PC-9 (cell line): ENCODE measurements at regions of chr17 and their contacts with region 1.

Region 1: GRCh38 chr17:28834420-28834819 is 8.2 kb downstream of the FAM222B start:
- DNase-seq: no peak
- H3K4me3 ChIP-seq: no peak overlapping the region
- H3K27ac ChIP-seq: no peak overlapping the region
- H3K4me1 ChIP-seq: no peaks in the 10 kb centered on the region
- H3K27me3 ChIP-seq: no peaks in the 10 kb centered on the region
- CTCF ChIP-seq: no peak

Region 2: GRCh38 chr17:29039764-29040598 is 205.6 kb after region 1 on chr17:
- CTCF ChIA-PET with region 1: no interaction called
- POLR2A ChIA-PET with region 1: interaction called, 16 read pairs
- intact Hi-C with region 1: no loop called
- DNase-seq: peak in 1 of 2 experiments; percentile 21
- H3K4me3 ChIP-seq: no peak overlapping the region
- H3K27ac ChIP-seq: no peak overlapping the region
- H3K4me1 ChIP-seq: no peaks in the 10 kb centered on the region
- H3K27me3 ChIP-seq: peaks cover 43% of the 10 kb centered on the region
- CTCF ChIP-seq: no peak